ENCODE measurements at regions of chr7 and their contacts with region 1.

Region 1: DNA sequence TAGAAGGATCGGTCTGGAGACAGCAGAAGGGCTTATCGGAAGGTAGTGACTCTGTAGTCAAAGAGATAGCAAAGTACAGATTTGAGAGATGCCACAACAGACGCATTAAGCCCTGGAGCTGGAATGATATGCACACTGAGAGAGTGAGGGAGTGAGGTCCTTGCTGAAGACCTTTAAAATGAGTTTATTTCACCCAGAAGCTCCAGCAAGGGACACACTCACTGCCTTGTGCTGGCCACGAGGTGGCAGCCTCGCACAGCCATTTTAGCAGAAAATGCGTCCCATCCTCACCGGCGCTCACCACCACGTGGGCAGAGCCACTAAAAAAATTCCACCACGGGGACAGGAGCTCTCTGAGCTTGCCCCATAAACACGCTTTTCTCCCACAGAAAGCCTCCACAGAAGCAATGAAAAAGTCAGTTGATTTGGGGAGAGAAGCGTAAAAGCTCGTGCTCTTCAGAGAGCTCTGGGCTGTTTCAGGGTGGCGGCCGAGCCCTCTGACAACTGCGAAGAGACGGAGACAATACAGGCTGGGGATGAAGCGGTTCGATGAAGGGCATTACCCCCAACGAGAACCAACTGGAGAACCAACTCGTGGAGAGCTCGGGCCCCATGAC is 163.0 kb upstream of the KLF14 start:
- DNase-seq: peak; percentile 85
- ATAC-seq: peak; percentile 77
- H3K4me3 ChIP-seq: no peak overlapping the region
- H3K4me3 Mint-ChIP-seq: peak overlapping the region; percentile 30
- H3K27ac ChIP-seq: peak overlapping the region in 1 of 2 donors; percentile 21
- H3K27ac Mint-ChIP-seq: peak overlapping the region; percentile 84
- H3K4me1 ChIP-seq: peaks cover 23 to 54% of the 10 kb centered on the region in 2 donors
- H3K4me1 Mint-ChIP-seq: peaks cover 71% of the 10 kb centered on the region
- H3K27me3 ChIP-seq: no peaks in the 10 kb centered on the region
- H3K27me3 Mint-ChIP-seq: no peaks in the 10 kb centered on the region
- CTCF ChIP-seq: peak; percentile 83

Region 2: GRCh38 chr7:130865408-130866236 is 31.4 kb before region 1 on chr7:
- CTCF ChIA-PET with region 1: no interaction called
- POLR2A ChIA-PET with region 1: no interaction called
- intact Hi-C with region 1: no loop called
- DNase-seq: no peak
- ATAC-seq: no peak
- H3K4me3 ChIP-seq: no peak overlapping the region
- H3K4me3 Mint-ChIP-seq: no peak overlapping the region
- H3K27ac ChIP-seq: no peak overlapping the region
- H3K27ac Mint-ChIP-seq: no peak overlapping the region
- H3K4me1 ChIP-seq: no peaks in the 10 kb centered on the region
- H3K4me1 Mint-ChIP-seq: peaks cover 9% of the 10 kb centered on the region
- H3K27me3 ChIP-seq: no peaks in the 10 kb centered on the region
- H3K27me3 Mint-ChIP-seq: no peaks in the 10 kb centered on the region
- CTCF ChIP-seq: no peak

Region 3: DNA sequence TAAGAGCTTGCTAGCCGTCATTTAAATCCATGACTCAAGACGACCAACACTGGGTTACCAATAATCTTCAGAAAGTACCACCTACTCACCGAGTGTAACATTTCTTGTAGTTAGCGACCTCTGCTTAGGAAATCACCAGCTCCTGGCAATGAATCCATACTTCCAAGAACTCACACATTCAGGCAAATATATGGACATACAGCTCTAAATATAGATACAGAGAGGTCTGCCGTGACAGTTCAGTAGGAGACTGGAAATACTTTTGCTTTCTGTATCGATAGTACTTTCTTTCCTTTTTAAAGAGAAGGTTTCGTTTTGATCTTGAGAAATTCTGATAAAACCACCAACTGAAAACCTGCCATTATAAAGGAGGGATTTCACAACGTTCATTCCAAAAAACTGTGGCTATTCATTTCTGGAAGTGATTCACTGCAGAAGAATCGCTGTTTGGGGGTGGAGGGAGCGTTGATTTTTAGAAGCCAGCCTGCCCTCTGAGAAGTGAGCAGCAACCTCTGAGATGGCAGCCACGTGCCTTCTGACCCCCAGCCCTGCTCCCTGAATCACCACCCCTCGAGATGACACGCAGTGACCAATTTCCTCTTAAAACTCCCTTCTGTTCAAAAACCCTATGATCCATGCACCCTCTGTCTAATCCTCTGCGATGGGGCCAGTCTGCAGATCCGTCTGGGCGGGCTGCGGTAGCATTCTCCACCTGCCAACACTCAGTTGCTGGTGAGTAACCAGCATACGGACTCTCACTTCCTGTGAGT is 16.0 kb after region 1 on chr7:
- CTCF ChIA-PET with region 1: interaction called, 35 read pairs
- POLR2A ChIA-PET with region 1: interaction called, 6 read pairs
- intact Hi-C with region 1: loop called (anchors 1 kb)
- DNase-seq: peak; percentile 92
- ATAC-seq: peak; percentile 91
- H3K4me3 ChIP-seq: peak overlapping the region; percentile 54 to 98 (median 73)
- H3K4me3 Mint-ChIP-seq: peak overlapping the region; percentile 90
- H3K27ac ChIP-seq: peak overlapping the region; percentile 82 to 98
- H3K27ac Mint-ChIP-seq: peak overlapping the region; percentile 84
- H3K4me1 ChIP-seq: peaks cover 28 to 37% of the 10 kb centered on the region in 2 donors
- H3K4me1 Mint-ChIP-seq: peaks cover 78% of the 10 kb centered on the region
- H3K27me3 ChIP-seq: no peaks in the 10 kb centered on the region
- H3K27me3 Mint-ChIP-seq: no peaks in the 10 kb centered on the region
- CTCF ChIP-seq: no peak

Region 4: DNA sequence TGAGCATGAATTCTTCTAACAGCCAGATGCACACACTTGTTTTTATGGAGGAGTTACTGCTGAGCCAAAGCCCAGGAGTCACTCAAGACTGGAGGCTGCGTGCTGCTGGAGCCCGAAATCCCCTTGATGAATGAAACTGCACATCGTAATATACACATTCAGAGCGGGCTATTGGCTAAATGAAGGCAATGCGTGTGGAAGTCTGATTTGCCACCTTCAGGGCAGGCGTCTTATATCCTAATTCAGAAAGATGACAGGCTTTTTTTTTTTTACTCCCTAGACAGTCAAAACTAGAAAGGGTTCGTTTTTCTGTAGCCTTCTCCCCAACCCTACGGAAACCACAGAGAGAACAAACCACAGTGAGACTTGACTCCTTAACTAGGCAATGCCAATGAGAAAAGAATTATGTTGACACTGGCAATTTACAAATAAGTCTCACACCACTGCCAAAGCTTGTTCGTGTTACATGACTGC is 64.2 kb after region 1 on chr7:
- CTCF ChIA-PET with region 1: interaction called, 6 read pairs
- POLR2A ChIA-PET with region 1: no interaction called
- intact Hi-C with region 1: loop called (anchors 1 kb)
- DNase-seq: peak; percentile 78
- ATAC-seq: peak; percentile 34
- H3K4me3 ChIP-seq: peak overlapping the region in 4 of 5 experiments; percentile 24 to 61 (median 38)
- H3K4me3 Mint-ChIP-seq: peak overlapping the region; percentile 90
- H3K27ac ChIP-seq: peak overlapping the region; percentile 66 to 81
- H3K27ac Mint-ChIP-seq: peak overlapping the region; percentile 94
- H3K4me1 ChIP-seq: peaks cover 62% of the 10 kb centered on the region in 2 donors
- H3K4me1 Mint-ChIP-seq: peaks cover 68% of the 10 kb centered on the region
- H3K27me3 ChIP-seq: no peaks in the 10 kb centered on the region
- H3K27me3 Mint-ChIP-seq: no peaks in the 10 kb centered on the region
- CTCF ChIP-seq: no peak

Region 5: DNA sequence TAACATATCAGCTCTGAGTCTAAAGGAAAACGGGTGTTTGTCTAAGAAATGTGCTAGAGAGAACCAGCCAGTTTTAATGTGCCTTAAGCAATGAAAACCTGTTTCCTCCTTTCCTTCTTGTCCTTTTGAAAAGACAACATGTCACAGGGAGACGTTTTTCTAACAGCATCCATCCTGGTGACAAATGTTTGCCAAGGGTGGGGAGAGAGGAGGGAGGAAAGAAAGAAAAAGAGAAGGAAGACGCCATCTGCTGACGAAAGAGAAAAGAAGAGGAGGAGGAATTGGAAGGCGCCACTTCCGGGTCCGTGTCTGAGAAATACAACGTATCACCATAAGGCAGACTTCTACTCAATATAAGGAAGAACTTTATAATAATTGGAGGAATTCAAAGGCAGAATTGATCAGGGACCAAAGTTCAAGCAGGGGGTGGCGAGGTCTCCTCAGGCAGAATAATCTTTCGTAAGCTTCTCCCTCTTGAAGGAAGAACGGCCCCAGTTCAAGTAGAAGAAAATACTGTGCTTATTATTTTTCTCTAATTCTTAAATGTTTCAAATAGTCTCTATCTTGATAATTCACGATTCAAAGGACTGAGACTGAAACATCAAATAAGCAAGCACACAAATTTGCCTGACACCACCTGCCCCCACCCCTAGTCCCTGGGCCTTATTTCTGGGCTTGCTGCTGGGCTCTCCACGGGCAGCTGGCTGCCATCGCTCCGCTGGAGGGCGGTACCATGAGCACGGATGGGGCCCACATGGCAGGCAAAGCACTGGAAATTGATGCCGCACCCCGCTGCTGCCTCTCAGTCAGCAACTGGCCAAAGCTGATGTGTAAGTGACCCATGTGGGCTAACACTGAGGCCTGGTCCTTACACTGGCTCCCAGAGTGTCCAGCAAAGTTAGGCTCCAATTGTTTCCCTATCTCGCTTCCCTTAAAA is 110.7 kb after region 1 on chr7:
- CTCF ChIA-PET with region 1: interaction called, 18 read pairs
- POLR2A ChIA-PET with region 1: no interaction called
- intact Hi-C with region 1: loop called (anchors 1 kb)
- DNase-seq: peak; percentile 82
- ATAC-seq: peak; percentile 70
- H3K4me3 ChIP-seq: no peak overlapping the region
- H3K4me3 Mint-ChIP-seq: peak overlapping the region; percentile 82
- H3K27ac ChIP-seq: peak overlapping the region; percentile 56 to 86
- H3K27ac Mint-ChIP-seq: peak overlapping the region; percentile 89
- H3K4me1 ChIP-seq: peaks cover 59 to 62% of the 10 kb centered on the region in 2 donors
- H3K4me1 Mint-ChIP-seq: peaks cover 77% of the 10 kb centered on the region
- H3K27me3 ChIP-seq: no peaks in the 10 kb centered on the region
- H3K27me3 Mint-ChIP-seq: no peaks in the 10 kb centered on the region
- CTCF ChIP-seq: peak; percentile 72

Region 6: DNA sequence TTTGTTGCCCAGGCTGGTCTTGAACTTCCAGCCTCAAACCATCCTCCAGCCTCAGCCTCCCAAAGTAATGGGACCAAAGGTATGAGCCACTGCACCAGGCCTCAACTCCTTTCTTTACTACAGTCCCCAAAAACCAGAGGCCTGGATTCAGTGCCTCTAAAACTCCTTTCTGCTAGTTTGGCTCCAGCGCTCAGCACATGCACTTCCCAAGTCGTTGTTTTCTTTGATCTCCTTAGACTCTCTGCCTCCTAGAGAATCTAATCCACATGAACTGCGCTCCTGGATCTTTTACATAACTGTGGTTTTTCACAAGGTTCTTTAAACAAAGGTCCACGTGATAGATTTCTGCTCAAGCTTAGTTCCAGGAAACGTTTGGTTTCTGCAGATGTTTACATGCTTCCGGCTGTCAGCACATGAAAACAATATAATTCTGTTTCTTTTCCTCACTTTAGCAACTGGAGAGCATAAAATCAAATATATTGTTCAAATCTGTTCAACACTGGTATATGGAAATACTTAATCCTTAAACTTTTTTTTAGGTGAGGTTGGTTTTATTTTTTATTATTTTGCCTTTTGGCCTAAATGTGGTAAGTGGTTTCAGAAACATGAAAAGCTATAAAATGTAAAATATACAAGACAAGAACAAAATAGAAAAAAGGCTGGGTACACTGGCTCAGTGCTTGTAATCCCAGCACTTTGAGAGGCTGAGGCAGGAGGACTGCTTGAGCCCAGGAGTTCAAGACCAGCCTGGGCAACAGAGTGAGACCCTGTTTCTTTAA is 160.2 kb after region 1 on chr7:
- CTCF ChIA-PET with region 1: interaction called, 13 read pairs
- POLR2A ChIA-PET with region 1: no interaction called
- intact Hi-C with region 1: no loop called
- DNase-seq: peak; percentile 79
- ATAC-seq: peak; percentile 61
- H3K4me3 ChIP-seq: peak overlapping the region in 4 of 5 experiments; percentile 18 to 29 (median 25)
- H3K4me3 Mint-ChIP-seq: peak overlapping the region; percentile 80
- H3K27ac ChIP-seq: peak overlapping the region; percentile 96
- H3K27ac Mint-ChIP-seq: peak overlapping the region; percentile 87
- H3K4me1 ChIP-seq: peaks cover 72 to 80% of the 10 kb centered on the region in 2 donors
- H3K4me1 Mint-ChIP-seq: peaks cover 74% of the 10 kb centered on the region
- H3K27me3 ChIP-seq: no peaks in the 10 kb centered on the region
- H3K27me3 Mint-ChIP-seq: no peaks in the 10 kb centered on the region
- CTCF ChIP-seq: no peak

Region 7: GRCh38 chr7:131424219-131424822 is 527.3 kb after region 1 on chr7:
- CTCF ChIA-PET with region 1: interaction called, 14 read pairs
- POLR2A ChIA-PET with region 1: interaction called, 3 read pairs
- intact Hi-C with region 1: loop called (anchors 1 kb)
- DNase-seq: peak; percentile 56
- ATAC-seq: peak; percentile 69
- H3K4me3 ChIP-seq: no peak overlapping the region
- H3K4me3 Mint-ChIP-seq: no peak overlapping the region
- H3K27ac ChIP-seq: no peak overlapping the region
- H3K27ac Mint-ChIP-seq: no peak overlapping the region
- H3K4me1 ChIP-seq: no peaks in the 10 kb centered on the region
- H3K4me1 Mint-ChIP-seq: peaks cover 2% of the 10 kb centered on the region
- H3K27me3 ChIP-seq: no peaks in the 10 kb centered on the region
- H3K27me3 Mint-ChIP-seq: no peaks in the 10 kb centered on the region
- CTCF ChIP-seq: peak; percentile 80

Measured in B cell (primary cell).